ENCODE measurements at regions of chr2 and their contacts with region 1.

Region 1: DNA sequence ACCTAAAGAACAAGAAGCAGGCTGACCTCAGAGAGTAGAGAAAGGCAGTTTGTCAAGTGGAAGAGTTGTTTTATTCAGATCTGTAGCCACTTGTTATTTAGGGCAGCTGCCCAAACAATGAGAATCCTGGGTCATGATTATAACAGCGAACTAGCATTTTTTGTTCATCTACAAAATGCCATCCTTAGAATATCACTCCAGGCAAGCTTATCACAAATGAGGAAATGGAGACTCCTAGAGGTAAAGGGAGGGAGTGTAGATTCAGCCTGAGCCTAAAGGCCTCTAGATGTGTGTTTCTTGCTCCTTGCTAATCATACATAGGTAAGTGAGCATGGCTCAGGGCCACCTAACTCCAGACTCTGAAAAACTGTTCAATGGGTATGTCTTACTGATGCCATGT is 126.1 kb downstream of the HNMT start:
- DNase-seq: peak; percentile 72
- ATAC-seq: peak; percentile 72
- H3K4me3 ChIP-seq: no peak overlapping the region
- H3K27ac ChIP-seq: no peak overlapping the region
- H3K4me1 ChIP-seq: peaks cover 15% of the 10 kb centered on the region
- H3K27me3 ChIP-seq: no peaks in the 10 kb centered on the region
- CTCF ChIP-seq: peak; percentile 85

Region 2: DNA sequence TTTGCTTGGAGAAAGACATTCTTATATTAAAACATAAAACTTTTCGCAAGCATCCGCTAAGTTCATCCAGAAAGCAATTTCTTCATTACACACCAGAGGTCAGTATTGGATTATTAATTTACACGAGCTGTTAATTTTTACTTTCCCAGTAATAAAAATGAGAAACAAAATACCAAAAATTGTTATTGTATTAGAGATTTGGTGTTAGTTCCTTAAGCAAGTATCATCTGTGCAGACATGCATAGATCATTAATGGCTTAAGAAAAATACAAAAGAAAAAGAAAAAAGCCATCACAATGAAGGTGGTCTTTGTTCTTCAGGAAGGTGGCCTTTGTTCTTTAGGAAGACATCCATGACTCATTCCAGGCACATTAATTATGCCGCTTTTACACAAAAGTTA is 179.7 kb before region 1 on chr2:
- CTCF ChIA-PET with region 1: no interaction called
- POLR2A ChIA-PET with region 1: no interaction called
- intact Hi-C with region 1: loop called (anchors 1 kb)
- DNase-seq: peak; percentile 71
- ATAC-seq: no peak
- H3K4me3 ChIP-seq: no peak overlapping the region
- H3K27ac ChIP-seq: no peak overlapping the region
- H3K4me1 ChIP-seq: no peaks in the 10 kb centered on the region
- H3K27me3 ChIP-seq: no peaks in the 10 kb centered on the region
- CTCF ChIP-seq: peak; percentile 83

Region 3: GRCh38 chr2:137947728-137948336 is 142.5 kb before region 1 on chr2:
- CTCF ChIA-PET with region 1: interaction called, 3 read pairs
- POLR2A ChIA-PET with region 1: no interaction called
- intact Hi-C with region 1: loop called (anchors 1 kb)
- DNase-seq: peak; percentile 84
- ATAC-seq: peak; percentile 63
- H3K4me3 ChIP-seq: no peak overlapping the region
- H3K27ac ChIP-seq: no peak overlapping the region
- H3K4me1 ChIP-seq: peaks cover 6% of the 10 kb centered on the region
- H3K27me3 ChIP-seq: no peaks in the 10 kb centered on the region
- CTCF ChIP-seq: peak; percentile 88

Region 4: DNA sequence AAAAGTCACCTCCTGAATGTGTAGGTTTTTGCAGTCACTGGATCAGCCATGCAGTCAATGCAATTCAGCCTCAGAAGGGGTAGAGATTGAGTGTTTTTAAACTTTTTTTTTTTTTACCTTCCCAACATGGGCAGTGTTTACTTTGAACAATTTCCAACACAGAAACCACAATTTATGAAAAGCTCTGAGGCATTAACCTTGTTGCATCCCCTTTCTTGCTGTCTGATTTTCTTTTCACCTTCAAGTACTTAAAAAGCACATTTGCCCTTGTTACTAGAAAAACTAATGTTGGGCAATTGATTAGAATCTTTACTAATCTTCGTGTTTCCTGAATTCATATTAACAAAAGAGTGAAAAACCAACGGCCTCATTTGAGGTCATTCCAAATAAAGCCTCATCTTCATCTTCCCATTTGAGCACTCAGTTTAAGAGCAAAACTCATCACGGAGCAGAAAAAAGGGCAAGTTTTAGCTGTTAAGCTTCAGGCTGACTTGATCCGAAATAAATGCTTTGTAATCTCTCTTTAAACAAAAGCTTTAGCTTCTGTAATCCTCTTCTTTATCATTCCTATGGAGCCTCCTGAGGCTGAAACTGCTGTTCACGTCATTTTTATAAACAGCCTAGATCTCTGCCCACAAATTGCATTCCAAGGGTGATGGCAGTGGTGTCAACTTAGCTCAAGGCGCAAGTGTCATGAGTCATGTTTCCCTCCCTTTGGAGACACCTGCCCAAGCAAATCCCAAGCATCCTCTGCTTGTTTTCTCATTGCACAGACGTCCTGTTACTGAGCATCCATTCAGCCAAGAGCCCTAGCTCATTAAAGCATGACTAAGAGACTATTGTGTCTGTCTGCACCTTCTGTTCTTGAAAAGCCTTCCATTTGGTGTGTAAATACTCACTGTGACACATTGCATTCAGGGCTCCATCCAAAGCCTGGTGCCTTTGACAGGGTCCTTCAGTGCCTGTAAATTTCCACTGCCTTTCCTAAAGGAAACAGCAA is 18.3 kb before region 1 on chr2:
- CTCF ChIA-PET with region 1: interaction called, 10 read pairs
- POLR2A ChIA-PET with region 1: no interaction called
- intact Hi-C with region 1: no loop called
- DNase-seq: peak; percentile 97
- ATAC-seq: peak; percentile 95
- H3K4me3 ChIP-seq: peak overlapping the region; percentile 43; the same call in 1 of the 2 replicates
- H3K27ac ChIP-seq: peak overlapping the region; percentile 90
- H3K4me1 ChIP-seq: peaks cover 24% of the 10 kb centered on the region
- H3K27me3 ChIP-seq: no peaks in the 10 kb centered on the region
- CTCF ChIP-seq: no peak

Region 5: DNA sequence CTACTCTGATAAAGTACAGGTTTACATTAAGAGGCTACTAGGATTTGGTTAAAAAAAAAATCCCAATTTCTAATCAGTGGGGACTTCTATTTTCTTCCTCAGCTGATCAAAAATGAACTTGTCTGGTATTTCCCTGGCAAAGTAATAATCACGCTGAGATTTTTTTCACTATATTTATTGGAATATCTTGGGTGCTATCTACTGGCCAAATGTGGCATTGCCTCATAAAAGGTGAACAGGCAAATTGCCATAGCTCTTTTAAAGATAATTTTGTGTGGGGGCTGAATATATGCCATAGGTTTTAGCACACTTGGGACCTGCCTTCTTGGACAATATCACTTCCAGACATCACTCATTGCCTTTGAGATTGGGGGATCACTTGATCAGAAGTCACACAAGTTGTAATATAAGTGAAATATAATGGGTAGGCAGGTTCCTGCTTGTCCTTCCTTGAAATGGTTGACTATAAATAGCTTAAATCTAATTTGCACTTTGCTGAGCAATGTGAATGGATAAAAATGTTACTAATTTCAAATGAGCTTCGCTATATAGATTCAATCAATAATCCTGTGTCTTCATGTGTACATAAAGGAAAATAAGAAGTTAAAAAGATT is 696.8 kb after region 1 on chr2:
- CTCF ChIA-PET with region 1: no interaction called
- POLR2A ChIA-PET with region 1: no interaction called
- intact Hi-C with region 1: loop called (anchors 5 kb)
- DNase-seq: peak; percentile 74
- ATAC-seq: no peak; the same call in 1 of the 2 replicates
- H3K4me3 ChIP-seq: no peak overlapping the region
- H3K27ac ChIP-seq: no peak overlapping the region
- H3K4me1 ChIP-seq: no peaks in the 10 kb centered on the region
- H3K27me3 ChIP-seq: peaks cover 12% of the 10 kb centered on the region
- CTCF ChIP-seq: peak; percentile 89